A549 (cell line): ENCODE measurements at regions of chr1 and their contacts with region 1.

Region 1: GRCh38 chr1:23098463-23099170 is 70.0 kb downstream of the LUZP1 start:
- DNase-seq: peak; percentile 36 to 76
- ATAC-seq: peak; percentile 47 to 53; a peak in 5 of 6 replicates
- H3K4me3 ChIP-seq: no peak overlapping the region
- H3K27ac ChIP-seq: peak overlapping the region; percentile 70 to 81
- H3K4me1 ChIP-seq: peaks cover 62% of the 10 kb centered on the region
- CTCF ChIP-seq: peak; percentile 82
- EP300 ChIP-seq: no peak
- POLR2A ChIP-seq: no peak
- RAD21 ChIP-seq: peak; percentile 91 to 94

Region 2: DNA sequence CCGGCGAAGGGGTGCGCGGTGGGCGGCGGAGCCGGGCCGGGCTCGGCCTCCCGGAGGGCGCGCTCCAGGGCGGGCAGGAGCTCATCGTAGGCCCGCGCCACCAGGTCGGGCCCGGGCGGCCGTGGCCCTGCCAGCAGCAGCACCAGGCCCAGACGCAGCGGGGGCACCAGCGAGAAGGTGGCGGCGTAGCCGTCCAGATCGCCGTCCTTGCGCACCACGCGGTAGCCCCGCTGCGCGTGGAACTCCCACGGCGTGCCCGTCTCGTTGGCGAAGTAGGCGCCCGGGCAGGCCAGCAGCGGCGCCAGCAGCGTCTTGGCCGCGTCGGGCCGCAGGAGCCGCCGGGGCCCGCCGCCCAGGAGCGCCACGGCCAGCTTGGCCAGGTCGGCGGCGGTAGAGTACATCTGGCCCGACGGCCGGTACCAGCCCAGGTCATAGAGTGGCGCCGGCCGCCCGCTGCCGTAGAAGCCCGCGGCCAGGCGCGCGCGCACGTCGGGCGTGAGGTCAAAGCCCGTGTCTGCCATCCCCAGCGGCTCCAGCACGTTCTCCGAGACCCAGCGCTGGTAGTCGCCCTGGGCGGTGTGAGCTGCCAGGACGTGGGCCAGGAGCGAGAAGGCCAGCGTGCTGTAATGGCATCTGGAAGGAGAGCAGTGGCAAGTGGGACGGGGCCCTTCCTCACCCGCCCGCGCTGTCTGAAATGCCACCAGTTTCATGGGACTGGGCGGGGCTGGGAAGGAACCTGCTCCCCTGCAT is 145.1 kb before region 1 on chr1:
- CTCF ChIA-PET with region 1: no interaction called
- POLR2A ChIA-PET with region 1: no interaction called
- DNase-seq: no peak
- ATAC-seq: no peak; a peak in 1 of 6 replicates
- H3K4me3 ChIP-seq: no peak overlapping the region
- H3K27ac ChIP-seq: no peak overlapping the region
- H3K4me1 ChIP-seq: no peaks in the 10 kb centered on the region
- CTCF ChIP-seq: no peak
- EP300 ChIP-seq: no peak
- POLR2A ChIP-seq: no peak
- RAD21 ChIP-seq: no peak

Region 3: DNA sequence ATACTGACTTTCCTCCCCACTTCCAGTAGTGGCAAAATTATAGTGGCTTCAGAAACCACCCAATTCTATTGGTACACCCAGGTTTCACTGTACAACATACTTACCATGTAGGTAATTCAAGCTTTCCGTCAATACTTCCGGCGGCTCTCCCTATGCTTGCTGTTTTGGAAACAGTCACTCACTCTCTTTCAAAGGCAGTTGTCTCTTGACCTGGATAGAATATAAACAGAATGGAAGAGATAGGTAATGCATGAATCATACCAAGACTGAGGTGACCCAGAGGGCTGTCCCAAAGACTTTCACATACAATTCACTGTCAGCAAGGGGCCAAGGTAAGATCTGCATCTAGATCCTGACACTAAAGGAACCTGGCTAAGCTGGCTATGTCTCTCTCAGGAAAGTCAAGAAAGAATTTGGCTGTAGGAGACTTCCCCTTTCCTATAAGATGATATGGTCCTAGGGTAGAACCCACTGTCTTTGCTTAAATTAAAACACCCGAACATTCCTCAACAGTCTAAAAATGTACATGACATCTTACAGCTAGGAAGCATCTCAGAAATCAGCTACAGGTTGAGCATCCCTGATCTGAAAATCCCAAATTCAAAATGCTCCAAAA is 10.4 kb after region 1 on chr1:
- CTCF ChIA-PET with region 1: interaction called, 18 read pairs
- POLR2A ChIA-PET with region 1: no interaction called
- DNase-seq: no peak
- ATAC-seq: no peak
- H3K4me3 ChIP-seq: no peak overlapping the region
- H3K27ac ChIP-seq: 0 out of 6 replicates have a peak overlapping the region, but pooled peaks of 1 of the 2 experiments have one; percentile 16
- H3K4me1 ChIP-seq: peaks cover 49% of the 10 kb centered on the region
- CTCF ChIP-seq: no peak
- EP300 ChIP-seq: no peak
- POLR2A ChIP-seq: no peak
- RAD21 ChIP-seq: no peak

Region 4: DNA sequence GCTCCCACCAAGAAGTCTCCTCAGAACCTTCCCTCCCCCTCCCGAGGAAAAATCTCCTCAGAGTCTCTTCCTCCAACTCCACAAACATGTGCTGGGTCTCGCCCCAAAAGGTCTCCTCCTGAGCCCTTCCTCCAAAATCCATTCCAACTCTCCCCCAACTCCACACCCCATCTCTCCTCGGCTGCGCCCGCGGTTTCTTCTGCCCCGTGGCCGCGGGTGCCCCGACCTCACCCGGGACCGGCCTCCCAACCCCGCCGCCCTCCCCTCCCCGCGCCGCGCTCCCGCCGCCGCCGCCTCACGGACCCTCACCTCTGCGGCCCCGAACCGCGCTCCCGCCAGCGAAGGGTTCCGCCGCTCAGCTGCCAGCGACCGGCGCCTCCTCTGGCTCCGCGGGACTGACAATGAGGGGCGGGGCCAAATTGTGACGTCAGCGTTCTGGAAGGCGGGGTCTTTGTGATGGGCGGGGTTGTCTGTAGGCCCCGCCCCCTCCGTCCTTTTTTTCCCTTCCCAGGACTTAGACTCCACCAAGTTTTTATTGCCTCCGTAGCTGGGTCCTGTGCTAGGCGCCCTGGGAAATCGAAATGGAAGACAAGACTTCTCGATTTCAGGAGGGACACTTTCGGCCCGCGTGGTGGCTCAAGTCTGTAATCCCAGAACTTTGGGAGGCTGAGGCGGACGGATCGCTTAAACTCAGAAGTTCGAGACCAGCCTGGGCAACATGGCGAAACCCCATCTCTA is 70.0 kb after region 1 on chr1 and contains the start of gene LUZP1:
- CTCF ChIA-PET with region 1: interaction called, 11 read pairs
- POLR2A ChIA-PET with region 1: interaction called, 8 read pairs
- DNase-seq: peak in 1 of 2 experiments; percentile 84
- ATAC-seq: peak; percentile 81 to 83
- H3K4me3 ChIP-seq: peak within 1 kb of the TSS; percentile 95
- H3K27ac ChIP-seq: peak within 1 kb of the TSS; percentile 89 to 98
- H3K4me1 ChIP-seq: peaks cover 31% of the 10 kb centered on the region
- CTCF ChIP-seq: no peak
- EP300 ChIP-seq: no peak
- POLR2A ChIP-seq: peak; percentile 71
- RAD21 ChIP-seq: no peak
- polyA plus RNA-seq, gene LUZP1: 18.3 and 26.2 TPM in 2 replicates

Region 5: DNA sequence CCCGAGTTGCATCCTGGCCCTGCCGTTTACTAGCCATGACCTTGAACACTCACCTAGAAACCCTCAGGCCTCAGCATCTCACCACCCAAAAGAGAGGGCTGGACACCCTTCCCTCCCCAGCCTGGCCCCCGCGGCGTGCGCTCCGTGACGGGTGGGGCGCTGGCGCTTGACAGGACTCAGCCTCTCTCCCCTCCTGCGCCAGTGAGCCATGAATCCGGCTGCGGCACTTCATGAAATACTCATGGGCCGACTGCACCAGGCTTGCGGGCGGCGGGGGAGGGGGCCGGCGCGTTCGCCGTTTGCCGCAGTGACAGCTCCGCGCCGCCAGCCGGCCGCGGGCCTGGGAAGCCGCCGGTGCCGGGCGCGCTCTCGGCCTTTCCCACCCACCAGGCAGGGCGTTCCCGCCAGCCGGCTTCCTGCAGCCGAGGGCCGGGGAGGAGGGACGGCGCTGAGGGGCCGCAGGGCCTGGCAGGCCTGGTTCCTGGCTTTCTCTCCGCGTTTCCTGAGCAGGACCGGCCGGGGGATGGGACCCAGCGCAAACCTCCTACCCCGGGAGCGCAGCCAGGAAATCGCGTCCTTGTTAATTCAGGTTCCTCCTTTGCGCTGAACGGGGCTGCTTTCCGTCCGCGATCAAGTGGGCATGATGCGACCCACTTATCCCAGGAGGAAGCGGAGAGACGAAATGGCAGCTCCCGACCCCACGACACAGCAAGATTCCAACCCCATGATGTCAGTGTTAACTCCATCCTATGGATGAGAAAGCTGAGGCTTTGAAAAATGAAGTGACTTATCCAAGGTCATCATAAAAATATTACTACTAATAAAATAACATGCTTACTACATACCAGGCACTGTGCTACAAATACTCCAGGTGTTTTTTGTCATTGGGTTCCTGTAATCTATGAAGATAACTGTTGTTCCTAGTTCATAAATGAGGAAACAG is 79.1 kb after region 1 on chr1:
- CTCF ChIA-PET with region 1: interaction called, 203 read pairs
- POLR2A ChIA-PET with region 1: interaction called, 3 read pairs
- DNase-seq: peak in 1 of 2 experiments; percentile 43
- ATAC-seq: peak; percentile 83 to 85
- H3K4me3 ChIP-seq: peak overlapping the region; percentile 41
- H3K27ac ChIP-seq: peak overlapping the region; percentile 79 to 94
- H3K4me1 ChIP-seq: peaks cover 20% of the 10 kb centered on the region
- CTCF ChIP-seq: no peak
- EP300 ChIP-seq: no peak
- POLR2A ChIP-seq: no peak
- RAD21 ChIP-seq: no peak

Region 6: DNA sequence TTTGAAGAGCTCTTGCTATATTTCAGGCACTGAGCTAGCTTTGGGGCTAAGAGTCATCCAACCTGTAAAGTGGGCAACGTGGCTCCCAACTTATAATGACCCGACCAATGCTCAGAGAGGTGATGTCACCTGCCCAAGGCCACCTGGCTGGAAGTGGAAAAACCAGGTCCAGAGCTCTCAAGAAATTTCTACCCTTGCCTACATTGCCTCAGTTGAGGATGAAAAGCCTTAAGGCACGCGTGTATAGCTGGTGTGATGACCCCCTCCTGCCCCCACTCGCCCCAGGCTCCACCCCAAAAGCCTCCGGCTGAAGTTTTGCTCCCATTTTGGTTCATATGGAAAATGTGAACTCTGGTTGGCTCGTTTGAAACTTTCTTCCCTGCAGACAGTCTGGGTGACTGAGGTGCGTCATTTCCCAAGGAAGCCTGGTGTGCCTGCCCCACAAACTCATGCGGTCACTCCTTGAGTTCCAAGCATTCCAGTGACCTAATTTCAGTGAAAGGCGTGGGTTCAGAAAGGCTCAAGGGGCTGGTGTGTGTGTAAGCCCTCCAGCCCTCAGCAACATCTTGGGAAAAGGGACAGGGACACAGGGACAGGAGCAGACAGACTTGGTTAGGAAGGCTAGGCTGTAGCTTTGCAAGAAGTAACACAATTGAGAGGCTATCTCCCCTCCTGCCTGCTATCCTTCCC is 98.2 kb after region 1 on chr1:
- CTCF ChIA-PET with region 1: interaction called, 11 read pairs
- POLR2A ChIA-PET with region 1: interaction called, 3 read pairs
- DNase-seq: peak; percentile 80 to 96
- ATAC-seq: peak; percentile 77 to 84
- H3K4me3 ChIP-seq: no peak overlapping the region
- H3K27ac ChIP-seq: peak overlapping the region; percentile 97 to 98
- H3K4me1 ChIP-seq: peaks cover 65% of the 10 kb centered on the region
- CTCF ChIP-seq: no peak
- EP300 ChIP-seq: peak; percentile 66 to 83; a peak in 3 of 5 replicates
- POLR2A ChIP-seq: no peak
- RAD21 ChIP-seq: 0 out of 5 replicates have a peak, but pooled peaks of 1 of the 2 experiments have one; percentile 10

Region 7: GRCh38 chr1:23224714-23225648 is 126.4 kb after region 1 on chr1:
- CTCF ChIA-PET with region 1: interaction called, 11 read pairs
- POLR2A ChIA-PET with region 1: no interaction called
- DNase-seq: no peak
- ATAC-seq: peak in 1 of 2 experiments; percentile 75; a peak in 3 of 6 replicates
- H3K4me3 ChIP-seq: no peak overlapping the region
- H3K27ac ChIP-seq: peak overlapping the region; percentile 54 to 72
- H3K4me1 ChIP-seq: peaks cover 16% of the 10 kb centered on the region
- CTCF ChIP-seq: no peak
- EP300 ChIP-seq: no peak
- POLR2A ChIP-seq: no peak
- RAD21 ChIP-seq: no peak

Region 8: GRCh38 chr1:23273450-23274133 is 175.0 kb after region 1 on chr1:
- CTCF ChIA-PET with region 1: interaction called, 14 read pairs
- POLR2A ChIA-PET with region 1: no interaction called
- DNase-seq: peak; percentile 28 to 88
- ATAC-seq: peak; percentile 82 to 88
- H3K4me3 ChIP-seq: no peak overlapping the region
- H3K27ac ChIP-seq: peak overlapping the region; percentile 74 to 83
- H3K4me1 ChIP-seq: peaks cover 61% of the 10 kb centered on the region
- CTCF ChIP-seq: no peak
- EP300 ChIP-seq: peak; percentile 19 to 30; a peak in 2 of 5 replicates
- POLR2A ChIP-seq: no peak
- RAD21 ChIP-seq: peak; percentile 19 to 27; a peak in 3 of 5 replicates